ENCODE measurements at regions of chr4 and their contacts with region 1.

Region 1: GRCh38 chr4:4344915-4345527 is 41.9 kb upstream of the NSG1 start:
- DNase-seq: peak; percentile 98
- H3K4me3 ChIP-seq: peak overlapping the region; percentile 56
- H3K27ac ChIP-seq: peak overlapping the region; percentile 99
- H3K4me1 ChIP-seq: peaks cover 76% of the 10 kb centered on the region
- CTCF ChIP-seq: no peak

Region 2: GRCh38 chr4:3945511-3946290 is 399.3 kb before region 1 on chr4:
- CTCF ChIA-PET with region 1: no interaction called
- POLR2A ChIA-PET with region 1: no interaction called
- intact Hi-C with region 1: loop called (anchors 10 kb)
- DNase-seq: no peak
- H3K4me3 ChIP-seq: no peak overlapping the region
- H3K27ac ChIP-seq: no peak overlapping the region
- H3K4me1 ChIP-seq: peaks cover 12% of the 10 kb centered on the region
- CTCF ChIP-seq: no peak

Region 3: DNA sequence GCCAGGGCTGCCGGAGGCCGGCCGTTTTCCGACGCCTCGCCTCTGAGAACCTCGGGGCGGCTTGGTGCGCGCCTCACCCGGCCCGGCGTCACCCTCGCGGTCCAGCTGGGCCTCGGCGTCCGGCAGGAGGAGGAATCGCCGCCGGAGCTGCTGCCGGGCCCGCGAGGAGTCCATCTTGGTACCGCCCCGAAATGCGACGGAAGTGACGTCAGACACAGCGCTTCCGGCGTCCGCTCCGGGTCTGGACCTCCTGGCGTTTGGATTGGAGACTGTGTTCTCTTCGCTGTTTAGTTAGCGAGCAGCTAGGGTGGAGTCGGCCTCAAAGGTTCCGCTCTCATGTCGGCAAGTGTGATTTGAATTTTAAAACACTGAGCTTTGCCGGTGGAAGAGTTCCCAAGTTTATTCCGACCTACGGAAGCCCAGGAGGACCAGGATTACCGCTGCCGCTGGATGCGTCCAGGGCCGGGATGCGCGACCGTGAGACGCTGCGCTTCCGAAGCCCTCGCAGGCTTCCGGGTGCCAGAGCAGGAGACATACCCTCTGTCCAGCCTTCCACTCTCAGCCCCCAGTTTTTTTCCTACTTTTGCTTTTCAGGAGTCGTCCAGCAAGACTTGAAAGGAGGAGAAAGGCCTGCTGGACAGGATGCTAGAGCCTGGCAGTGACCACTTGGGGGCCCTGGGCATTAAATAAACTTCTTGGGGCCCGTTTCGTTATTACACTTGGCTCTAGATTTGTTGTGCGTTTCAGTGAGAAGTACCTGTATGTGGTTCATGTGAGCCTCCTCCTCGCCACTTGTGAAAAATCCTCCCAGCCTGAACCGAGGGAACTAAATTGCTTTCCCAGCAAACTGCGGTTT is 96.8 kb before region 1 on chr4 and contains the start of gene TMEM128:
- CTCF ChIA-PET with region 1: no interaction called
- POLR2A ChIA-PET with region 1: interaction called, 10 read pairs
- intact Hi-C with region 1: no loop called
- DNase-seq: peak; percentile 94
- H3K4me3 ChIP-seq: peak within 1 kb of the TSS; percentile 95
- H3K27ac ChIP-seq: peak within 1 kb of the TSS; percentile 46
- H3K4me1 ChIP-seq: peaks cover 13% of the 10 kb centered on the region
- CTCF ChIP-seq: peak; percentile 23; the same call in 1 of the 2 replicates
- total RNA-seq, gene TMEM128: 11.2 and 13.9 TPM in 2 replicates

Region 4: DNA sequence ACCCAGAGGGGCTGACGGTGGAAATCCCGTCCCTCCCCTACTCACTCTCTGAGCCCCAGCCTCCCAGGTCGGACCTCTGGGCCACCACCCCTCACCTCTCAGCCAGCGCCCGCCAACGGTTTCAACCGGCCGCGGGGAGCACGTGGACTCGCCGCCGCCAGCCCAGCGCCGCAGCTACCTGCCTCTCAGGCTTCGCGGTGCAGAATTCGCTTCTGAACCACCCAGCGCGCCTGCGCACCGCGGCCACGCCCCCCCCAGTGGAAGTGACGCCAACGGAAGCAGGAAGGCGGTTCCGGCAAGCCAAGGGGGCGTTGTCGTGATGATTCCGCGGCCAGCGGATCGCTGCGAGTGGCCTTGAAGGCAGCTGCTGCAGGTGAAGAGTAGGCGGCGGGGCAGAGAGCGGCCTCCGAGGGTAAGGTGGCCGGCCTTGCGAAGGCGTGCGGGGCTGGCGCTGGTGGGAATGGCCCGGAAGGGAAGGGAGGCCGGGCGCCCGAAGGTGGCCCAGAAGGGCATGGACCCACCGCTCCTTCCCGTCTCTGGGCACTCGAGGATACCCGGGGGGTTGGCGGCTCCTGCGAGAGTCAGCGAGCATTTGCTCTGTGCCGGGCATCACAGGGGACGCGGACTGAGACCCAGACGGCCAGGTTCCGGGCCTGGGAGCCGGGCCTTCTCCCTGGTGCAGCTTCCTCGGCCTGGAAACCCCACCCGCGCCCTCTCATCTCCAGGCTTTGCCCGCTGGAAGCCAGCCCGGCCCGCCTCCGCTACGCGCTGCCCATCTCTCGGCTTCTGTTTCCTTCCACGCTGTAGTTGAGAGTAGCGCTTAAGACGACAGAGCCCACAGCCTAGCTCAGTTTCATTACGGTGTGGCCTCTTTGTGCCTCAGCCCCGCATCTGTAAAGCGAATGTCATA is 54.8 kb before region 1 on chr4 and contains the starts of genes LYAR and ZBTB49:
- CTCF ChIA-PET with region 1: no interaction called
- POLR2A ChIA-PET with region 1: interaction called, 6 read pairs
- intact Hi-C with region 1: loop called (anchors 2 kb)
- DNase-seq: peak; percentile 92
- H3K4me3 ChIP-seq: peak within 1 kb of the TSS; percentile 78
- H3K27ac ChIP-seq: peak within 1 kb of the TSS; percentile 30
- H3K4me1 ChIP-seq: peaks cover 20% of the 10 kb centered on the region
- CTCF ChIP-seq: no peak
- total RNA-seq, gene LYAR: 58.8 and 86.8 TPM in 2 replicates
- total RNA-seq, gene ZBTB49: 6.5 and 9.9 TPM in 2 replicates

Region 5: GRCh38 chr4:4386736-4387392 is 41.8 kb after region 1 on chr4 and contains the start of gene NSG1:
- CTCF ChIA-PET with region 1: no interaction called
- POLR2A ChIA-PET with region 1: interaction called, 3 read pairs
- intact Hi-C with region 1: loop called (anchors 2 kb)
- DNase-seq: peak; percentile 53
- H3K4me3 ChIP-seq: peak within 1 kb of the TSS; percentile 79
- H3K27ac ChIP-seq: peak within 1 kb of the TSS; percentile 54
- H3K4me1 ChIP-seq: peaks cover 42% of the 10 kb centered on the region
- CTCF ChIP-seq: no peak
- total RNA-seq, gene NSG1: 28.8 and 38.8 TPM in 2 replicates

Region 6: DNA sequence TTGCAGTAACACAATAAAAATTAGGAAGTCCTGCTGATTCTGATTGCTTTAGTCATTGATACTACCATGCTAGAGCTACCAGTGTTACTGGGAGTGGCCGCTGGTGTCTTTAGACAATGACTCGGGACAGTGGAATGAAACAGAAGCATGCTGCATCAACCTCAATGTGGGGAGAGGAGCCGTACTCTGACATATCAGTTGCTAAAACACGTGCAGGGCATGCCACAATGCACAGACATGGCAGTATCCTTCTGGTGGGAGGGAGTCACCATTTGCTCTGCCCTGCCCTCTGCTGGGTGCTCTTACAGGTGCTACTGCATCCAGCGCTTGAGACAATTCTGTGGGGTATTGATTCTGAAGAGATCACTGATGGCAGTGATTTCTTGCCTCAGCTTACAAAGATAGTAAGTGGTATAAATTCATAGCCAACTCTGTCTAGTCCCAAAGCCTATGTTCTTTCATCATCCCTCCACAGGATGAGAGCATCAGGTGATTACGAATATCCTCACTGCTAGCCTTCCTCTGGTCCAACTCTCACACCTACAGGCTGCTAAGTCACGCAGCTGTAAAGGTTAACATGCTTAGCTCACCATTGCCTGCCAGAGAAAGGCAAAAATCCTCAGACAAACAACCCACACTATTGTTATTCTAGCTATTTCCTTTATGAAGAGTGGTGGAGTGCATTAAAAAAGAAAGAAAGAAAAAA is 85.6 kb after region 1 on chr4:
- CTCF ChIA-PET with region 1: no interaction called
- POLR2A ChIA-PET with region 1: no interaction called
- intact Hi-C with region 1: loop called (anchors 1 kb)
- DNase-seq: peak; percentile 86
- H3K4me3 ChIP-seq: no peak overlapping the region
- H3K27ac ChIP-seq: no peak overlapping the region
- H3K4me1 ChIP-seq: peaks cover 24% of the 10 kb centered on the region
- CTCF ChIP-seq: peak; percentile 92

Region 7: DNA sequence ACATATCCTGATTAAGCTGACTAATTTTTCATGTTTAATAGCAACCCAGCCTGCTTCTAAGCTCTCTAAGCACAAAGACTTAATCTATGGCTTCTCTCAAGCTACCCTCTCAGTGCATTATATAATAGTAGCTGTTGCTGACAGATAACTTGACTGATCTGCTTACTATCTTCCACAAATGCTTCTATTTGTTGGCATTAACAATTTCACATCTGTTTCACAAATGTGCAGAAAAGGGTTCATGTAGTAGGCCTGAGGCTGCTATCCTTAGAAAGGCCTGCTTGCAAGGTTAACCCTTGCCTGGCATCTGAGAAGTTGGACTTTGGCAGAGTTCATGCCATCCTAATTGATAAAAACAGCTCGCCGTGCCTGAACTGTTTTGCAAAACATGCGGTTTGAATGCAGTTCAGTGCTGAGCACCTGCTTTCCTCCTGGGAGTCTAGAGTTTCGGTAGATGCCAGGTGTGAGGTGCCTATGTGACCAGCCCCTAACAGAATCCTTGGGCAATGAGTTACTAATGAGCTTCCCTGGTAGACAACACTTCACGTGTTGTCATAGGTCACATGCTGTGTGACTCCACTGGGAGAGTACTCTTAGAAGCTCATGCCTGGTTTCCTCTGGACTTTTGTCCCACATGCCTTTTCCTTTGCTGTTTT is 110.3 kb after region 1 on chr4:
- CTCF ChIA-PET with region 1: no interaction called
- POLR2A ChIA-PET with region 1: interaction called, 11 read pairs
- intact Hi-C with region 1: loop called (anchors 2 kb)
- DNase-seq: peak; percentile 92
- H3K4me3 ChIP-seq: peak overlapping the region; percentile 32
- H3K27ac ChIP-seq: peak overlapping the region; percentile 81
- H3K4me1 ChIP-seq: peaks cover 60% of the 10 kb centered on the region
- CTCF ChIP-seq: no peak

Measured in OCI-LY7 (cell line).